BJ (cell line): ENCODE measurements at regions of chr11 and their contacts with region 1.

Region 1: DNA sequence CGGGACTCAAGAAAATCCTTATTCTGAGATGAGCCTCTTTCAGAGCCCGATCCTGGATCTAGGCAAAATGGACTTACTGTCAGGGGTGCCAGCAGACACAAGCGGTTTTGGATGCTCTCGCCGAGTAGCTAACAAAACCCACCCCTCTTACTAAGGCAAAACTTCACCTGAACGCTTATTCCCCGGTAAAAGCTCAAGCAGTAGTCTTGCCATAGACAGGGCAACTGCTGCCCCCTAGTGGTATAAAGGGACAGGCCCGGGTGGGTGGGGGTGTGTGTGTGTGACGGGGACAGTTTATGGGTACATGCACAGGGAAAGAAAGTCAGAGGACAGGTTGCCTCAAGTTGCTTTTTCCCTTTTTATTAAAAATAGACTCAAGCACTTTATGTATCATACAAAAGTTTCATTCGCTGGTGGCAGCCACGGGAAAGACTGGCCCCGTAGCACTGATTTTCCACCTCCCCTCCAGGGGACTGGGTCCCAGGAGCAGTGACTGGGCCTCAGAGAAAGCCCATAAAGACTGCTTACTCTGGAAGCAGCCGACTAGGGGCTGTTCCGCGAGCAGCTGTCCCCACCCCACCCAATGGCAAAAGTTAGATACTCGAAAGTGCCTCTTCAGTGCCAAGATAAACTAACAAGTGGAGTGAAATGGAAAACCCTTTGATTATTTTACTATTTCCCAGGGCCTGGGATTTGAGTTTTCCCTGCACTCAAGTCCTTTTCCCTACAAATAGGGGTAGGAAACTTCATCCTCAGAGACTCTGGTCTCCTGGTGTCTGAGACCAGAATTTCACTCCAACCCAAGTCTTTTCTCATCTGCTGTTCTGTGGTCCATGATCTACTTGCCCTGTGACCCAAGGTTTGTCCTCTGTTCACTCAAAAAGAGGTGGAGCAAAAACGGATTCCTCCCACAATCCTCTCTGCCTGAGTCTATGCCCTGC is 4.7 kb downstream of the YPEL4 start:
- DNase-seq: no peak
- H3K4me3 ChIP-seq: no peak overlapping the region
- H3K27me3 ChIP-seq: no peaks in the 10 kb centered on the region
- CTCF ChIP-seq: peak; percentile 91

Region 2: GRCh38 chr11:57556061-57556460 is 89.0 kb before region 1 on chr11:
- CTCF ChIA-PET with region 1: interaction called, 11 read pairs
- POLR2A ChIA-PET with region 1: no interaction called
- DNase-seq: no peak
- H3K4me3 ChIP-seq: no peak overlapping the region
- H3K27me3 ChIP-seq: no peaks in the 10 kb centered on the region
- CTCF ChIP-seq: no peak

Region 3: DNA sequence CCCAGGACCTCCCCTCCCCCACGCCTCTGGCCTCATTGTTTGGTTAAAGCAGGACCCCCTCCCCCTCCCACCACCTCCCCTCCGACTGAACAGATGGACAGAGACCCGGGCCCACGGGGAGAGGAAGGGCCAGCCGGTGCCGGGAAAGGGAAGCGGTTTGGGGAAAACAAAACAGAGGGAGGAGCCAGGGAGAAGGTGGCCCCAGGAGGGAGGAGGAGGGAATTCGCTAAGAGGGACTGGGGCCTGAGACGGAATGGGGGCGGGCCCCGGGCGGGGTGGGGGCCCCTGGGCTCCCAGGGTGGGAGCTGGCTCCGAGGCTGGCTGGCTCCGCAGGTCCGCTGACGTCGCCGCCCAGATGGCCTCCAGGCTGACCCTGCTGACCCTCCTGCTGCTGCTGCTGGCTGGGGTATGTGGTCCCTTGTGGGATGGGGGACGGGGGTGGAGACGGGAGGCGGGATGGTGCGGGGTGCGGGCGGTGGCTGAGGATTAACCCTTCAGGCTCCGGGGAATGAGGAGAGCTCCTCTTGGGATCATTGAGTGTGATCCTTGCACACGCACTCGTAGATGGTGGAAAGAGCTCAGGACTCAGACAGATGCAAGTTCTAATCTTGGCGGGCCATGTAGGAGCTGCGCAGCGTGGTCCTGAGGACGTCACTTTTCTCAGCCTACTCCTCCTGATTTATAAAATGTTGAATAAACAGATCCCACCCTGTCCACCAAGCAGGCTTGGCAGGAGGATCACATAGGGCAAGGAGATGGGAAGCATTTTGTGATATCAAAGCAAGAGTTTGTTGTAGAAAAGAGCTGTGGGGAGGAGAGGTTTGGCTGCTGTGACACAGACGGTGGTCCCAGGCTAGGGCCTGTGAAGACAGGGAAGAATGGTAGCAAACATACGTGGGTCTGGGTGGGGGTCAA is 46.8 kb before region 1 on chr11:
- CTCF ChIA-PET with region 1: interaction called, 30 read pairs
- POLR2A ChIA-PET with region 1: no interaction called
- DNase-seq: no peak
- H3K4me3 ChIP-seq: peak overlapping the region; percentile 60
- H3K27me3 ChIP-seq: 0 out of 2 replicates have a peak, but pooled peaks cover 3% of the 10 kb centered on the region
- CTCF ChIP-seq: no peak

Region 4: DNA sequence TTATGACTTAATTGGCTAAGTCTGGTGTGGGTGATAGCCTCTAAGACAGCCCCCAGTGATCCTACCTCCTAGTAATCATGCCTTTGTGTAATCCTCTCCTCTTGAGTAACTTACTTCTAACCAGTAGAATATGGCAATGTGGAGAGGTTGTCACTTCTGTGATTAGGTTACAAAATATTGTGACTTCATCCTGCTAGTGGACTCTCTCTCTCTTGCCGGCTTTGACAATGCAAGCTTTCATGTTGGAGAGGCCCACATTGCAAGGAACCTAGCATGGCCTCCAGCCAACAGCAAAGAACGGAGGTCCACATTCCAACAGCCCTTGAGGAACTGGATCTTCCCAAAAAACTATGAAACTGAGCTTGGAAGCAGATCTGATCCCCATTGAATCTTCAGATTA is 14.8 kb before region 1 on chr11:
- CTCF ChIA-PET with region 1: interaction called, 11 read pairs
- POLR2A ChIA-PET with region 1: interaction called, 9 read pairs
- DNase-seq: no peak
- H3K4me3 ChIP-seq: no peak overlapping the region
- H3K27me3 ChIP-seq: peaks cover 2% of the 10 kb centered on the region; the same call in 1 of the 2 replicates
- CTCF ChIP-seq: no peak

Region 5: DNA sequence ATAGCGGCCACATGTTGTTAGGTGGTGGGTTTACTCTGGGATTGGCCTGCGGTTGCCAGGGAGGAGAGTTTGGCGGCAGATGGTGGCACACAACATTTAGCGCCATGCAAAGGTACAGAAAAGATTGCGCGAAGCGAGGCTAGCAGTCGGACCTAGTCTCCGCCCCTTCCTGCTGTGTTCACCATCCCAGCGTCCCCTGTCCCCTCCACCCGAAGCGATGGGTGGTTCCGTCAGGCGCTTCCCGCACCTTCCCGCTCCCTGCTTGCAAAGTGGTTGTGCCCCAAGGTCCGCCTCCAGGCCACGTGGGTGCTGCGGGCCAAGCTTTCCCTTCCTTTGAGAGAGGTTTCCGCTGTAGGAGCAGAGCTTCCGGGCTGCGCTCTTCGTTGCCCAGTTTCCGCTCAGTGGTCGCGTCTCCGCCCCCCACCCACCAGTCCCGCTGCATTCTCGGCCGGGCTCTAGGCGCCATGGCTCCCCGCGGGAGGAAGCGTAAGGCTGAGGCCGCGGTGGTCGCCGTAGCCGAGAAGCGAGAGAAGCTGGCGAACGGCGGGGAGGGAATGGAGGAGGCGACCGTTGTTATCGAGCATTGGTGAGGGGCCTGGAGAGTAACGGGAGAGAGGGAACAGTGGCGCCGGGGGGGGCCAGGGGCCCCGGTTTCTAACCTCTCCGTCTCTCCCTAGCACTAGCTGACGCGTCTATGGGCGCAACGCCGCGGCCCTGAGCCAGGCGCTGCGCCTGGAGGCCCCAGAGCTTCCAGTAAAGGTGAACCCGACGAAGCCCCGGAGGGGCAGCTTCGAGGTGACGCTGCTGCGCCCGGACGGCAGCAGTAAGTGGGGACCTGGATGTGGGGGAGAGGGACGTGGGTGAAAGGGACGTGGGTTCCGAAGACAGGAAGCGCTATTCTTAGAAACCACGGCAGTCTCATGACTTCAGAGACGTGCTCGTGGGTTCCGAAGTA is 96.4 kb after region 1 on chr11 and contains the start of gene SELENOH:
- CTCF ChIA-PET with region 1: no interaction called
- POLR2A ChIA-PET with region 1: no interaction called
- DNase-seq: peak; percentile 82
- H3K4me3 ChIP-seq: peak within 1 kb of the TSS; percentile 84
- H3K27me3 ChIP-seq: no peaks in the 10 kb centered on the region
- CTCF ChIP-seq: no peak
- polyA plus RNA-seq, gene SELENOH: 50.7 and 68.3 TPM in 2 replicates